ENCODE measurements at regions of chr18 and their contacts with region 1.

Region 1: GRCh38 chr18:60809937-60810336 is 437.4 kb upstream of the MC4R start:
- DNase-seq: no peak
- H3K4me3 ChIP-seq: no peak overlapping the region
- H3K27ac ChIP-seq: no peak overlapping the region
- H3K4me1 ChIP-seq: no peaks in the 10 kb centered on the region
- H3K27me3 ChIP-seq: no peaks in the 10 kb centered on the region
- CTCF ChIP-seq: no peak

Region 2: DNA sequence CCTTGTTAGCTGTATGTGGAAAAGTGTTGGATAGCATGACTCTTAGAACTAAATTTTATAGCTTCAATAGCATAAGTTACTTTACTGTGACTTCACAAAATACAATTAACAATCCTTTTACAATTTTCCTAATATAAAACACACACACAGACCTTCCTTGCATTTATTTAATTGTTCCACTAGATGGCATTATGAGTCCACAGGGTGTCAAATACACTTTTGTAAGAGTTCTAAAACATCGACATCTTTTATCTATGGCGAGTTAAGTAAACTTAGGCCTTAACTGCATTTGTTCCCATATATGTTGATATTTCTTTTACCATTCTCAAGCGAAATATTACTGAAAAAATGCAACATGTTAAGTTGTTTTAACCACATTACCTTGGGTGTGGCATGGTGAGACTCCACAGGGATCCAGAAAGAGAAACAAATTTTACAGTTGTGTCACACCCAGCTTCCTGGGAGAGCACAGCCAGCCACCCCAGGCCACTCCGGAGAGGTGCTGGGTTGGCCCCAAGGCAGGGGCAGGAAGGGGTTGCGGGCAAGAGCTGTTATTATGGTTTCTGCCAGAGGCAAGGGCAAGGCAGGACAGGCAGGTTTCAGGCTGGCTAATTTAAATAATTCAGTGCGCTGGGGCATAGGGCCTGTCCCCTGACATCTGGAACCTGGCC is 125.0 kb before region 1 on chr18:
- CTCF ChIA-PET with region 1: no interaction called
- dilution Hi-C with region 1: no loop called
- in situ Hi-C with region 1: no loop called
- intact Hi-C with region 1: loop called (anchors 1 kb)
- DNase-seq: peak; percentile 17
- H3K4me3 ChIP-seq: no peak overlapping the region
- H3K27ac ChIP-seq: no peak overlapping the region
- H3K4me1 ChIP-seq: peaks cover 6% of the 10 kb centered on the region
- H3K27me3 ChIP-seq: no peaks in the 10 kb centered on the region
- CTCF ChIP-seq: peak; percentile 62 to 73

Region 3: DNA sequence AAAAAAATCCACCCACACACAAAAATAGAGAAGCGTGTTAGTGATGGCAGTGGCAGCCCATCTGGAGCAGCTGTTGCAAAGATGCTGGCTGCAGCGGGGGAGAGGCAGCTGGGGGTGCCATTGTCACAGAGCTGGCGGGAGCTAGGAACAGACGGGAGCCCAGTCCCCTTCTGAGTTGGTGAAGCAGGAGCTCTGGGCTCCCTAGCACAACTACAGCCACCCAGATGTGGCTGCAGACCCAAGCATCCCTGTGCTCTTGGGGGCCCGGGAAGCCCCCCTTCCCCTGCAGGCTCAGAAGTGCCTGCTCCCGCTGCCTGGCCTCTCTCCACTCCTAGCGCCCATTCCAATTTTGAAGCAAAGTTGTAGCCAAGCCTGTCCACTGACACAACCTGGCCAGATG is 70.7 kb before region 1 on chr18:
- CTCF ChIA-PET with region 1: no interaction called
- dilution Hi-C with region 1: no loop called
- in situ Hi-C with region 1: no loop called
- intact Hi-C with region 1: no loop called
- DNase-seq: no peak
- H3K4me3 ChIP-seq: no peak overlapping the region
- H3K27ac ChIP-seq: no peak overlapping the region
- H3K4me1 ChIP-seq: no peaks in the 10 kb centered on the region
- H3K27me3 ChIP-seq: no peaks in the 10 kb centered on the region
- CTCF ChIP-seq: no peak

Region 4: GRCh38 chr18:61085761-61086160 is 275.8 kb after region 1 on chr18:
- CTCF ChIA-PET with region 1: no interaction called
- dilution Hi-C with region 1: no loop called
- in situ Hi-C with region 1: loop called in 1 of 2 experiments (anchors 25 kb)
- intact Hi-C with region 1: loop called (anchors 2 kb)
- DNase-seq: no peak
- H3K4me3 ChIP-seq: no peak overlapping the region
- H3K27ac ChIP-seq: no peak overlapping the region
- H3K4me1 ChIP-seq: no peaks in the 10 kb centered on the region
- H3K27me3 ChIP-seq: no peaks in the 10 kb centered on the region
- CTCF ChIP-seq: peak in 1 of 2 donors; percentile 14

Region 5: DNA sequence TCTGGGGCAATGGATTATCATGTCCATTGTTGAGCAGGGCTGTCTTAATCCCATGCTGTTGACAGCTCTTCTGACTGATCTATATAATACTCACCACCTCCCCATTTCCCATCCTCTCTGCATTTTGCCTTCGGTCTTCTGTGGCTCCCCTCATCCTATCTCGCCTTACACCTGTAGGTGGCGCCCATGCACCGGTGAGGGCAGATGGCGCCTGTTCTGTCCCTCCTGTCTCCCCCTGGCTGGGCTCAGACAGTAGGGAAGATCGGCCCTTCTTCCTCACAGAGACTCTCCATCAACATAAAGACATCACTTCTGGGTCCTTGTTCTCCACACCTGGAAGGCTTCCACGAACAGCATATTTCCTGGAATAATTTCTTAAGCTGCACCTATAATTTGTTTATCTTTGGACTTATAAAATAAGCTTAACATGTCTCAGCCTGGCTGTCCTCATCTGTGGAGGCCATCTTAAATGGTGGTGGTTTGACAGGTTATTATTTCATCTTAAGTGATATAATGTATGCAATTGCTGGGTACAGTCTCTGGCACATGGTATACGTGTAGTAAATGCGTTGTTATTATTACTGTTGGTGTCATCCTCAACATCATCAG is 512.4 kb after region 1 on chr18:
- CTCF ChIA-PET with region 1: no interaction called
- dilution Hi-C with region 1: no loop called
- in situ Hi-C with region 1: no loop called
- intact Hi-C with region 1: loop called (anchors 5 kb)
- DNase-seq: peak; percentile 35
- H3K4me3 ChIP-seq: no peak overlapping the region
- H3K27ac ChIP-seq: no peak overlapping the region
- H3K4me1 ChIP-seq: no peaks in the 10 kb centered on the region
- H3K27me3 ChIP-seq: no peaks in the 10 kb centered on the region
- CTCF ChIP-seq: peak; percentile 87 to 97

Region 6: GRCh38 chr18:61475931-61476330 is 666.0 kb after region 1 on chr18:
- CTCF ChIA-PET with region 1: no interaction called
- dilution Hi-C with region 1: no loop called
- in situ Hi-C with region 1: loop called in 1 of 2 experiments (anchors 25 kb)
- intact Hi-C with region 1: no loop called
- DNase-seq: no peak
- H3K4me3 ChIP-seq: no peak overlapping the region
- H3K27ac ChIP-seq: no peak overlapping the region
- H3K4me1 ChIP-seq: no peaks in the 10 kb centered on the region
- H3K27me3 ChIP-seq: peaks cover 14% of the 10 kb centered on the region
- CTCF ChIP-seq: no peak

Region 7: DNA sequence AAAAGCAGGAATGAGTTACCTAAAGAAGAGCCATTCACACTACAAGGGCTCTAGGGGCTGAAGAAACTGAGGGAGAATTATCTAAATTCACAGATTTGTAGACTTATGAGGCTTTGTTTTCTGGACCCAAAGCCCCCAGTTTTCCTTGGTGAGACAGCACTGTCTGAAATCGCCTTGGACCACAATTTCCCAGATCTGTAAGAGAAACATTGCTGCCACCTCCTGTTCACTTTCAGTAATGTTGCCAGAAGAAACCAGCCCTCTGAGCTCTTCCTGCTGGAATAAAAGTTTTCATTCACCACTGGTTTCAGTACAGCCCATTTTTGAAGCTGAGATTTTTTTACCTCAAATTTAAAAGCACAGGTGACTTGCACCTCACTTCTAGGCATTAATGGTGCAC is 692.5 kb after region 1 on chr18:
- CTCF ChIA-PET with region 1: interaction called, 5 read pairs
- dilution Hi-C with region 1: no loop called
- in situ Hi-C with region 1: loop called in 1 of 2 experiments (anchors 25 kb)
- intact Hi-C with region 1: loop called (anchors 1 kb)
- DNase-seq: peak; percentile 32
- H3K4me3 ChIP-seq: no peak overlapping the region
- H3K27ac ChIP-seq: no peak overlapping the region
- H3K4me1 ChIP-seq: no peaks in the 10 kb centered on the region
- H3K27me3 ChIP-seq: no peaks in the 10 kb centered on the region
- CTCF ChIP-seq: peak; percentile 64 to 79

Region 8: DNA sequence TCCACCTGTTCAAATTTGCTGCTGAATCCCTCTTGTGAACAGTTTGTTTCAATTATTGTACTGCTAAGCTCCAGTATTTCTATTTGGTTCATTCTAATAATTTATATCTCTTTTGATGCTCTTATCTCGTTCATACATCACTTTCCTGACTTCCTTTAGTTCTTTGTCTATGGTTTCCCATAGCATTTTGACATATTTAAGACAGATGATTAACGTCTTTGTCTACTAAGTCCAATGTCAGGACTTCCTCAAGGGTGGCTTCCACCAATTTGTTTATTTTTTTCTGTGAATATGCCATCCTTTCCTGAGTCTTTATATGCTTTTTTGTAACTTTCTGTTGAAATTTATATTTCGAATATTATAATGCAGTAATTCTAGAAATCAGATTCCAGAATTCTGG is 1367.3 kb after region 1 on chr18:
- CTCF ChIA-PET with region 1: interaction called, 10 read pairs
- dilution Hi-C with region 1: no loop called
- in situ Hi-C with region 1: no loop called
- intact Hi-C with region 1: no loop called
- DNase-seq: no peak
- H3K4me3 ChIP-seq: no peak overlapping the region
- H3K27ac ChIP-seq: no peak overlapping the region
- H3K4me1 ChIP-seq: no peaks in the 10 kb centered on the region
- H3K27me3 ChIP-seq: no peaks in the 10 kb centered on the region
- CTCF ChIP-seq: no peak

Measured in mammary epithelial cell (primary cell).